ENCODE measurements at regions of chr2 and their contacts with region 1.

Region 1: GRCh38 chr2:62410015-62410453 is 96.0 kb downstream of the TMEM17 start:
- DNase-seq: no peak
- H3K4me3 ChIP-seq: no peak overlapping the region
- H3K4me1 ChIP-seq: peaks cover 13% of the 10 kb centered on the region
- H3K27me3 ChIP-seq: no peaks in the 10 kb centered on the region

Region 2: DNA sequence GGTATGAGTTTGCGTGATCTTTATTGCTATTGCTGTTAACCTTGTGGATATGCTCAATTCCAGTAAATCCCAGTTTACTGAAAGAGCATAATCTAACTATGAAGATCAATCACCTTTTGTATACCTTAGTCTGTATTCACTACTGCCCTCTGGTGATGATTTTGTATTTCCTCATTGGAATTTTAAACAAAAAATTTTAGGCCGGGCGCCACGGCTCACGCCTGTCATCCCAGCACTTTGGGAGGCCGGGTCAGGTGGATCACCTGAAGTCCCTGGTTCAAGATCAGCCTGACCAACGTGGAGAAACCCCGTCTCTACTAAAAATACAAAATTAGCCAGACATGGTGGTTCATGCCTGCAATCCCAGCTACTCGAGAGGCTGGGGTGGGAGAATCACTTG is 499.4 kb before region 1 on chr2:
- in situ Hi-C with region 1: loop called (anchors 5 kb)
- DNase-seq: no peak
- H3K4me3 ChIP-seq: no peak overlapping the region
- H3K4me1 ChIP-seq: 0 out of 2 replicates have a peak, but pooled peaks cover 3% of the 10 kb centered on the region
- H3K27me3 ChIP-seq: no peaks in the 10 kb centered on the region

Region 3: GRCh38 chr2:61993444-61994024 is 416.5 kb before region 1 on chr2:
- in situ Hi-C with region 1: loop called (anchors 5 kb)
- DNase-seq: peak; percentile 50 to 63
- H3K4me3 ChIP-seq: no peak overlapping the region
- H3K4me1 ChIP-seq: no peaks in the 10 kb centered on the region
- H3K27me3 ChIP-seq: no peaks in the 10 kb centered on the region

Region 4: GRCh38 chr2:62524293-62524941 is 114.4 kb after region 1 on chr2:
- in situ Hi-C with region 1: no loop called
- DNase-seq: no peak
- H3K4me3 ChIP-seq: no peak overlapping the region
- H3K4me1 ChIP-seq: peaks cover 26% of the 10 kb centered on the region
- H3K27me3 ChIP-seq: no peaks in the 10 kb centered on the region

Measured in HAP-1 (cell line).